Aorta (tissue), 5 donors: ENCODE measurements at regions of chr9 and their contacts with region 1.

Region 1: GRCh38 chr9:109320742-109321448 is at the start of gene EPB41L4B:
- DNase-seq: peak; percentile 86 to 95
- ATAC-seq: peak; percentile 90
- H3K4me3 ChIP-seq: peak within 1 kb of the TSS; percentile 45 to 90
- H3K27ac ChIP-seq: no peak within 1 kb of the TSS
- H3K4me1 ChIP-seq: no peaks in the 10 kb centered on the region
- H3K27me3 ChIP-seq: no peaks in the 10 kb centered on the region
- total RNA-seq, gene EPB41L4B: 0.63 to 1.3 TPM

Region 2: DNA sequence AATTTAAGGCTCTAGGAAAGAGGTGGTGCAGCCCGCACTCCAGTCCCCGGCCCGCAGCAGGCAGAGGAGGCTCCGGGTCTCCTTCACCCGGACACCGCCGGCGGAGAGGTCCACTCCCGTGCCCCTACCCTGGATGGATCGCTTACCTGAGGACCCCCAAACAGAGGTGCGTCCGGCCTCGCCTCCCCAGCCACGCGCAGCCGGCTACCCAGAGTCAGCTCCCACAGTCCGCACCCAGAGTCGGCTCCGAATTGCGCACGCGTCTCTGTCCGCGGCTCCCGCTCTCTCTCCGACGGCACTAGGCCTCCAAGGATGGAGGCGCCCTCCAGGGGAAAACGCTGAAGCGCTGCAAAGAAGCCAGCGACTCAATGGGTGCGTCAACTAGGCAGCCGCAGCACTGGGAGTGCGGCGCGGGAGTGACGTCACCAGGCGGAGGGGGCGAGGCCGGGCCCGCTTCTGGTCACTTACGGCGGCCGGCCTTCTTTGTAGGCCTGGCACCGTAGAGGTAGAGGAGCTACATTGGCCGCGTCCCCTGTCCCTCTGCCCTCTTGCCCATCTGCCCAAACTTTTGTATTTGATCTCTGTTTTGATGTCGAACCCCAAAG is 387.1 kb before region 1 on chr9 and contains the start of gene ELP1:
- intact Hi-C with region 1: loop called in 1 of 2 experiments (anchors 10 kb)
- DNase-seq: peak; percentile 96 to 98
- ATAC-seq: peak; percentile 96
- H3K4me3 ChIP-seq: peak within 1 kb of the TSS; percentile 61 to 62
- H3K27ac ChIP-seq: peak within 1 kb of the TSS in 1 of 2 donors; percentile 79
- H3K4me1 ChIP-seq: peaks cover 0 to 5% of the 10 kb centered on the region in 2 donors
- H3K27me3 ChIP-seq: no peaks in the 10 kb centered on the region
- total RNA-seq, gene ELP1: 13.9 to 19.5 TPM

Region 3: GRCh38 chr9:109110326-109111021 is 210.4 kb before region 1 on chr9:
- intact Hi-C with region 1: no loop called
- DNase-seq: no peak
- ATAC-seq: peak; percentile 65
- H3K4me3 ChIP-seq: no peak overlapping the region
- H3K27ac ChIP-seq: peak overlapping the region in 1 of 2 donors; percentile 80
- H3K4me1 ChIP-seq: peaks cover 6 to 9% of the 10 kb centered on the region in 2 donors
- H3K27me3 ChIP-seq: no peaks in the 10 kb centered on the region

Region 4: GRCh38 chr9:109182940-109183798 is 137.7 kb before region 1 on chr9:
- intact Hi-C with region 1: loop called in 1 of 2 experiments (anchors 10 kb)
- DNase-seq: no peak
- ATAC-seq: peak; percentile 43
- H3K4me3 ChIP-seq: no peak overlapping the region
- H3K27ac ChIP-seq: no peak overlapping the region
- H3K4me1 ChIP-seq: no peaks in the 10 kb centered on the region
- H3K27me3 ChIP-seq: no peaks in the 10 kb centered on the region

Region 5: GRCh38 chr9:109244157-109245132 is 76.5 kb before region 1 on chr9:
- intact Hi-C with region 1: loop called (anchors 1 to 2 kb)
- DNase-seq: peak; percentile 79 to 90
- ATAC-seq: peak; percentile 88
- H3K4me3 ChIP-seq: no peak overlapping the region
- H3K27ac ChIP-seq: no peak overlapping the region
- H3K4me1 ChIP-seq: no peaks in the 10 kb centered on the region
- H3K27me3 ChIP-seq: no peaks in the 10 kb centered on the region

Region 6: DNA sequence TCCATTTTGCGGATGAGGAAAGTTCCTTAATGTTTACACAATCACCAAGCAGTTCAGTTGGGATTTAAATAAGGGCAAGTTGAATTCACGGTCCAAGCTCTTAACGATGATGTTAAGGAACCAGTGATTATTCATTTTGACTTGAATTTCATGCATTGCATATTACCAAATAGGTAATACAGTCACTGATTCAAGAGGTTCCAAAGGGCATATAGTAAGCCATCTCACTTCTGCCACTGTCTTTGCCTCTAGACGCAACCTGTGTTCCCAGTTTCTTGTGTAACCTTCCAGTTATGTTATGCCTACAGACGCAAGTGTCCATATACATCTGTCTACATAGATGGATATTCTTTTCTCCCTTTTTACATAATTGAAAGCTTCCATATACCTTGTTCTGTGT is 39.9 kb after region 1 on chr9:
- intact Hi-C with region 1: no loop called
- DNase-seq: no peak
- ATAC-seq: no peak
- H3K4me3 ChIP-seq: no peak overlapping the region
- H3K27ac ChIP-seq: no peak overlapping the region
- H3K4me1 ChIP-seq: no peaks in the 10 kb centered on the region
- H3K27me3 ChIP-seq: no peaks in the 10 kb centered on the region